Posterior cingulate gyrus (tissue), 11 donors: ENCODE measurements at regions of chr19 and their contacts with region 1.

Region 1: GRCh38 chr19:29715701-29716581 is 880 bp upstream of the C19orf12 start:
- DNase-seq: peak in 1 of 10 donors; percentile 11

Region 2: DNA sequence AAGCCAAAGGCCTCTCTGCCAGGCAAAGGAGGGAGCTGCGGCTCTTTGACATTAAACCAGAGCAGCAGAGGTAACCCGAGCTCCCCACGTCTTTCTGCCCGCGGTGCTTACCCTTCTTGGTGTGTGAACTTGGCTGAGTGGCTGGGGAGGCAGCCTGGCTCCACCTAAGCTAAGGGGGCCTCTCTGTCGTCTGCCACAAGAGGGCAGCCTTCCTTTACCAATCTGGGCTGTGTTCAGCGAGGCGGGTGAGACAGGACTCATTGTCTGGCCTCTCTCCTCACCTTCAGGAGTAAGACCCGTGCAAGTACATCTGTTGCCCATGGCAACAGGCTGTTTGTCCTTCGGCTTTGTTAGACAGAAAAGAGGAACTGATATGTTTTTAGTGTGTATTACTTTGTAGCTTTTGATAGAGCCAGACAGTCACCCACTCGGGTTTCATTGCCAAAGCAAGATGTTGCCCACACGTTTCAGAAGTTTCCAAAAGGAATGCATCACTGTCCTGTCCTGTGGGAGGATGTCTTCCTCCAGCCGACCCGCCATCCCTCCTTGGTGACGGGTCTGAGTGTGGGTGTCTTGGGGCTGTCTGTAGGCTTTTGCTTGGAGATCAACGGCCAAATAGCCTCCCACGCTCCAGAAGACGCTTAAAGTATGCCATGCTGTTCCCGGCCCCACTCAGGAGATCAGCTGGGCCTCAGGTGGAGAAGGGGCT is 105.2 kb before region 1 on chr19:
- intact Hi-C with region 1: loop called (anchors 1 kb)
- DNase-seq: peak; percentile 63 to 97 (median 84)

Region 3: DNA sequence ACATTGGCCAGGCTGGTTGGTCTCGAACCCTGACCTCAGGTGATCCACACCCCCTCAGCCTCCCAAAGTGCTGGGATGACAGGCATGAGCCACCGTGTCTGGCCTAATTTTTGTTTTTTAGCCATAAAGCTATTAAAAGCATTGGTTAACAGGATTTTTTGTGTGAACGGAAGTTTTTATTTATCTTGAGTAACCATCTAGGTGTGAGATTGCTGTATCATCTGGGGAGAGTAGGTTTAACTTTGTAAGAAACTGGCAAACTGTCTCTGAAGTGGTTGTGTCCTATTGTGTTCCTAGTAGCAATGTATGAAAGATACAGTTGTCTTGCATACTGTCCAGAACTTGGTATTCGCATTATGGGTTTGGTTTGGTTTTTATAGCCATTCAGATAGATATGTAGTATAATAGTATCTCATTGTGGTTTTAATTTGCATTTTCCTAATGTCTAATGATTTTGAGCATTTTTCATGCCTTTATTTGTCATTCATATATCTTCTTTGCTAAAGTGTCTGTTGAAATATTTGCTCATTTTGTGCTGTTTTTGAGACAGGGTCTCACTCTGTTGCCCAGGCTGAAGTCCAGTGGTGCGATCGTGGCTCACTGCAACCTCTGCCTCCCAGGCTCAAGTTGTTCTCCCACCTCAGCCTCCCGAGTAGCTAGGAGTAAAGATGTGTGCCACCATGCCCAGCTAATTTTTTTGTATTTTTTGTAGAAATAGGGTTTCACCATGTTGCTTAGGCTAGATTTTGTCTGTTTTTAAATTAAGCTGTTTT is 64.1 kb before region 1 on chr19:
- intact Hi-C with region 1: no loop called
- DNase-seq: peak in 2 of 10 donors; percentile 14 to 20

Region 4: GRCh38 chr19:29665215-29665825 is 50.6 kb before region 1 on chr19 and contains the start of gene PLEKHF1:
- intact Hi-C with region 1: loop called (anchors 2 kb)
- DNase-seq: peak; percentile 85 to 99 (median 90)

Region 5: GRCh38 chr19:29694669-29695627 is 21.0 kb before region 1 on chr19:
- intact Hi-C with region 1: loop called (anchors 1 kb)
- DNase-seq: peak; percentile 75 to 98 (median 88)